CD4-positive, alpha-beta memory T cell (primary cell): ENCODE measurements at regions of chr12 and their contacts with region 1.

Region 1: GRCh38 chr12:7645394-7646177 is 20.1 kb downstream of the APOBEC1 start:
- DNase-seq: peak in 4 of 5 donors; percentile 24 to 32 (median 30)
- H3K4me3 ChIP-seq: no peak overlapping the region
- H3K4me3 Mint-ChIP-seq: no peak overlapping the region
- H3K27ac ChIP-seq: no peak overlapping the region
- H3K27ac Mint-ChIP-seq: no peak overlapping the region
- H3K4me1 ChIP-seq: peaks cover 11% of the 10 kb centered on the region
- H3K4me1 Mint-ChIP-seq: peaks cover 8 to 15% (median 9%) of the 10 kb centered on the region in 4 donors
- H3K27me3 ChIP-seq: no peaks in the 10 kb centered on the region
- H3K27me3 Mint-ChIP-seq: no peaks in the 10 kb centered on the region

Region 2: GRCh38 chr12:6927379-6928024 is 718.1 kb before region 1 on chr12 and contains the start of gene ATN1:
- CTCF ChIA-PET with region 1: no interaction called
- POLR2A ChIA-PET with region 1: no interaction called
- intact Hi-C with region 1: no loop called
- DNase-seq: peak; percentile 37 to 65 (median 45)
- H3K4me3 ChIP-seq: peak within 1 kb of the TSS; percentile 57 to 65
- H3K4me3 Mint-ChIP-seq: peak within 1 kb of the TSS; percentile 88 to 94 (median 90)
- H3K27ac ChIP-seq: peak within 1 kb of the TSS; percentile 67
- H3K27ac Mint-ChIP-seq: peak within 1 kb of the TSS; percentile 91 to 97 (median 94)
- H3K4me1 ChIP-seq: peaks cover 43% of the 10 kb centered on the region
- H3K4me1 Mint-ChIP-seq: peaks cover 31 to 57% (median 43%) of the 10 kb centered on the region in 4 donors
- H3K27me3 ChIP-seq: no peaks in the 10 kb centered on the region
- H3K27me3 Mint-ChIP-seq: no peaks in the 10 kb centered on the region
- total RNA-seq, gene ATN1: 32.2 to 33.0 TPM

Region 3: DNA sequence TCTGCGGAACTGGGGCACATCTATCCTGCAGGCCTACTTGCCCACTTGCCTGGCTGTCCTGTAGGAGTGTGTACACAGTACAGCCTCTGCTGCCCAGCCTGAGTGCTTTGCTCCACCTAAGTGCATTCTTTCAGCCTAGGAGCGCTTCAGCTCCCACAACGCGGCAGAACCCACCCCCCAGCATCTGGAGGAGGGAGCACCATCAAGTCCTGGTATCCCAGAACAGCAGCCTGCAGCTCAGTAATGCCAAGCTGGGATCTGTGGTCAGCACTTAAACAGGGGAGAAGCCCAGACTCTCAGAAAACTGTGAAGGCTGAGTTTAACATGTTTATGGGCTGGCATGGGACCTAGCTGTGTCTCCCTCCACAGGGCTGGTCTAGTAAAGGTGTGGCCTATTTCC is 62.0 kb before region 1 on chr12:
- CTCF ChIA-PET with region 1: interaction called, 36 read pairs
- POLR2A ChIA-PET with region 1: no interaction called
- intact Hi-C with region 1: loop called (anchors 1 kb)
- DNase-seq: no peak
- H3K4me3 ChIP-seq: no peak overlapping the region
- H3K4me3 Mint-ChIP-seq: no peak overlapping the region
- H3K27ac ChIP-seq: no peak overlapping the region
- H3K27ac Mint-ChIP-seq: no peak overlapping the region
- H3K4me1 ChIP-seq: no peaks in the 10 kb centered on the region
- H3K4me1 Mint-ChIP-seq: peaks cover 0 to 2% (median under 1%) of the 10 kb centered on the region in 4 donors
- H3K27me3 ChIP-seq: no peaks in the 10 kb centered on the region
- H3K27me3 Mint-ChIP-seq: peaks cover 18 to 23% of the 10 kb centered on the region in 2 donors

Region 4: GRCh38 chr12:8899830-8900229 is 1254.2 kb after region 1 on chr12:
- CTCF ChIA-PET with region 1: no interaction called
- POLR2A ChIA-PET with region 1: no interaction called
- intact Hi-C with region 1: no loop called
- DNase-seq: no peak
- H3K4me3 ChIP-seq: no peak overlapping the region
- H3K4me3 Mint-ChIP-seq: no peak overlapping the region
- H3K27ac ChIP-seq: no peak overlapping the region
- H3K27ac Mint-ChIP-seq: no peak overlapping the region
- H3K4me1 ChIP-seq: no peaks in the 10 kb centered on the region
- H3K4me1 Mint-ChIP-seq: peaks cover 0 to 3% (median 0%) of the 10 kb centered on the region in 4 donors
- H3K27me3 ChIP-seq: no peaks in the 10 kb centered on the region
- H3K27me3 Mint-ChIP-seq: peaks cover 0 to 6% of the 10 kb centered on the region in 2 donors